SK-N-SH (cell line): ENCODE measurements at regions of chr1 and their contacts with region 1.

Region 1: GRCh38 chr1:54488779-54489626 is 59.0 kb upstream of the ACOT11 start:
- DNase-seq: peak; percentile 95
- H3K4me3 ChIP-seq: peak overlapping the region; percentile 54 to 86
- H3K27ac ChIP-seq: peak overlapping the region; percentile 96 to 97
- H3K4me1 ChIP-seq: peaks cover 11 to 31% of the 10 kb centered on the region in 2 experiments; a peak in 3 of 4 replicates
- H3K27me3 ChIP-seq: no peaks in the 10 kb centered on the region
- CTCF ChIP-seq: peak; percentile 90
- EP300 ChIP-seq: no peak
- RAD21 ChIP-seq: peak; percentile 84

Region 2: GRCh38 chr1:54070171-54070837 is 418.7 kb before region 1 on chr1:
- CTCF ChIA-PET with region 1: interaction called, 19 read pairs
- POLR2A ChIA-PET with region 1: no interaction called
- DNase-seq: peak; percentile 68
- H3K4me3 ChIP-seq: peak overlapping the region in 1 of 2 experiments; percentile 30; a peak in 1 of 4 replicates
- H3K27ac ChIP-seq: no peak overlapping the region
- H3K4me1 ChIP-seq: no peaks in the 10 kb centered on the region
- H3K27me3 ChIP-seq: no peaks in the 10 kb centered on the region
- CTCF ChIP-seq: peak; percentile 91
- EP300 ChIP-seq: no peak
- RAD21 ChIP-seq: peak; percentile 89

Region 3: GRCh38 chr1:54121482-54122134 is 367.4 kb before region 1 on chr1:
- CTCF ChIA-PET with region 1: interaction called, 75 read pairs
- POLR2A ChIA-PET with region 1: interaction called, 4 read pairs
- DNase-seq: peak; percentile 96
- H3K4me3 ChIP-seq: peak overlapping the region in 1 of 2 experiments; percentile 37; a peak in 1 of 4 replicates
- H3K27ac ChIP-seq: peak overlapping the region in 1 of 2 experiments; percentile 40; a peak in 1 of 4 replicates
- H3K4me1 ChIP-seq: peaks cover 4 to 5% of the 10 kb centered on the region in 2 experiments; a peak in 2 of 4 replicates
- H3K27me3 ChIP-seq: no peaks in the 10 kb centered on the region
- CTCF ChIP-seq: peak; percentile 74
- EP300 ChIP-seq: no peak
- RAD21 ChIP-seq: peak; percentile 85

Region 4: GRCh38 chr1:54273092-54273794 is 215.8 kb before region 1 on chr1:
- CTCF ChIA-PET with region 1: interaction called, 19 read pairs
- POLR2A ChIA-PET with region 1: no interaction called
- DNase-seq: peak; percentile 80
- H3K4me3 ChIP-seq: no peak overlapping the region
- H3K27ac ChIP-seq: peak overlapping the region in 1 of 2 experiments; percentile 90; a peak in 2 of 4 replicates
- H3K4me1 ChIP-seq: peaks cover 0 to 46% of the 10 kb centered on the region in 2 experiments; a peak in 2 of 4 replicates
- H3K27me3 ChIP-seq: no peaks in the 10 kb centered on the region
- CTCF ChIP-seq: no peak; the same call in 1 of the 2 replicates
- EP300 ChIP-seq: 0 out of 4 replicates have a peak, but pooled peaks of 1 of the 2 experiments have one; percentile 23
- RAD21 ChIP-seq: peak; percentile 65

Region 5: DNA sequence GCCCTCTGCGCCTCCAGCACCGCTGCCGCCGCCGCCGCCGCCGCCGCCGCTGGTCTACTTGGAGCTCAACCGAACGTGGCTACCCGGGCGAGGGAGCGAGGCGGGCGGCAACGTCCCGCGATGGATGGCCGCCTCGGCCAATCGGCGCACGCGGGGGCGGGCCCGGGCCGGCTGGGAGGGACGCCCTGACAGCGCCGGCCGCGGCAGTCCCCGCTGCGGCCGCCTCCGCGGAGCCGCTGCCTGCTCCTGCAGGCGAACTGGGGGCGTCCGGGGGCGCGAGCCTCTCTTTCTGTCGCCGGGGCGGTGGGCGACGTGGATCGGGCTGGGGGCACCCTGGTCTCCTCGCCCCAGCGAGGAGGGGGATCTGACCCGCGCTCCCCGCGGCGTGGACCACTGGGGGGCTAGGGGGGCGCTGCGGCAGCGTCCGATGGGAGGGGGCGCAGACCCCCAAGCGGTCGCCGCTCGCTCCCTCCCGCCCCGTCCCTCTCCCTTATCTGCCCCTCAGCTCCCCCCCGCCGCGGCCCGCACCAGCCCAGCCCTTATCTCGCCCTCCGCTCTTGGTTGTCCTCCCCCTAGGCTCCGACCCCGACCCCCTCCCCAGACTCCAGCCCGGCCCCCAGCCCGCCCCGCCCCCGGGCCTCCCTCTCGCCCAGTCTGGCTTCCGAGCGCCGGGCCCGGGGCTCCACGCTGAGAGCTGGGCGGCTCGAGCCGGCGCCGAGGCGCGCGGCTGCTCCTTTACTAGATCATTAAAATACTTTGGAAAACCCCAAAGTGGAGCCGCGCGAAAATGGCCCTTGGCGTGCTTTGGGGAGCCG is 82.5 kb before region 1 on chr1 and contains the start of gene SSBP3:
- CTCF ChIA-PET with region 1: interaction called, 38 read pairs
- POLR2A ChIA-PET with region 1: interaction called, 21 read pairs
- DNase-seq: peak; percentile 99
- H3K4me3 ChIP-seq: peak within 1 kb of the TSS; percentile 72 to 84
- H3K27ac ChIP-seq: peak within 1 kb of the TSS; percentile 96 to 99
- H3K4me1 ChIP-seq: peaks cover 20 to 41% of the 10 kb centered on the region in 2 experiments
- H3K27me3 ChIP-seq: no peaks in the 10 kb centered on the region
- CTCF ChIP-seq: peak; percentile 31
- EP300 ChIP-seq: no peak
- RAD21 ChIP-seq: no peak
- polyA plus RNA-seq, gene SSBP3: 18.0 and 26.2 TPM in 2 replicates

Region 6: DNA sequence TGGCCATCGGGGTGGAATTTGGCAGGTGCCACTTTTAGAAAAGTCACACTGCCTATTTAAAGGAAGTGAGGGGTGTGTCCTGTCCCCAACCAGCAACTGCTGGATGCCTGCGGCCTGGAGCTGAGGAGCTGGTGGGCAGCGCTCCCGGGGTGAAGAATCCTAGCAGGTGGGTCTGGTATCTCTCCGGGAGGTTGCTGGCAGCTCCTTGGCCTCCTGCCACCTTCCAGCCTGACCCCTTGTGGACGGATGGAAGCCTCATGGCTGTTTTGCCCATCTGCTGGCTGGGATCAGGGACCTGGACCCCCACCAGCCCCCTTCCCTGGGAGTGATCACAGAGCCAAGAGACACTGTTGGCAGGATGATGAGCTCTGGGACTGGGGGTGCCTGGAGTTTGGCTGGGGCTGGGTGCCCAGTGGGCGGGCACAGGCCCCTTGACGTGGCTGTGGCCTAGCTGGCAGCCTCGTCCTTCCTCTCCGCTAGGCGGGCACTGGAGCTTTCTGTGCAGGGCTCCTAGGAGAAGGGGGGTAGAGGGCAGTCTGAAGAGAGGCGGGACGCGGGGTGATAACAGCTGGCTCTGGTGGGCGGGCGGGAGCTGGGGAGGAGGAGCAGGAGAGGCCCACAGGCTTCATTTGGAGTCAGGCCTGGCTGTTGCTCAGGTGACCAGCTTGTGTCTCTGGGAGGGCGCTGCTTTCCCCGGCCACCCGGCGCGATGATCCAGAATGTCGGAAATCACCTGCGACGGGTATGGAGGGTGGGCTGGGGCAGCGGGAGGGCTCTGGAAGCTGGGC is 58.8 kb after region 1 on chr1 and contains the start of gene ACOT11:
- CTCF ChIA-PET with region 1: interaction called, 27 read pairs
- POLR2A ChIA-PET with region 1: interaction called, 4 read pairs
- DNase-seq: peak; percentile 93
- H3K4me3 ChIP-seq: peak within 1 kb of the TSS; percentile 41 to 44; a peak in 3 of 4 replicates
- H3K27ac ChIP-seq: peak within 1 kb of the TSS; percentile 82 to 96
- H3K4me1 ChIP-seq: peaks cover 28 to 64% of the 10 kb centered on the region in 2 experiments
- H3K27me3 ChIP-seq: no peaks in the 10 kb centered on the region
- CTCF ChIP-seq: peak; percentile 90
- EP300 ChIP-seq: peak; percentile 91 to 93; a peak in 3 of 4 replicates
- RAD21 ChIP-seq: peak; percentile 64
- polyA plus RNA-seq, gene ACOT11: 6.9 and 7.2 TPM in 2 replicates

Region 7: DNA sequence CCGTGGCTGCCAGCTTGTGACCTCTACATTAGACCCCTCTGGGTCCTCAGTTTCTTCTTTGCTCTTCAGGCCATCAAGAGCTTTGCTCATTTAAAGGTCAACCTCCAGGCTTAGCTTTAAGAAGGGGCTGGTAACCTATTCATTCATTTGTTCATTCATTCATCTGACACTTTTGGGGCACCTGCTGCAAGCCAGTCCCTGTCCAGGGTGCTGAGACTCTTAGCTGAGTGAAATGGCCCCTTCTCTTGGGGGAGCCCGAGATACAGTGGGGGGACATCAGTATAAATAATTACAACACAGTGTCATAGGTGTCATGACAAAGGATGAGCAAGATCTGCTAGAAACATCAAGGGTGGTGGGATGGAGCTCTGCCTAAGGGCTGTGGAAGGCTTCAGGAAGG is 216.2 kb after region 1 on chr1:
- CTCF ChIA-PET with region 1: no interaction called
- POLR2A ChIA-PET with region 1: no interaction called
- DNase-seq: no peak
- H3K4me3 ChIP-seq: no peak overlapping the region
- H3K27ac ChIP-seq: no peak overlapping the region
- H3K4me1 ChIP-seq: no peaks in the 10 kb centered on the region
- H3K27me3 ChIP-seq: no peaks in the 10 kb centered on the region; the same call in 1 of the 2 replicates
- CTCF ChIP-seq: no peak
- EP300 ChIP-seq: no peak
- RAD21 ChIP-seq: no peak